HCT116 (cell line): ENCODE measurements at regions of chr3 and their contacts with region 1.

Region 1: GRCh38 chr3:137121704-137122314 is 164.0 kb downstream of the IL20RB start:
- DNase-seq: peak; percentile 61
- ATAC-seq: peak; percentile 95
- H3K4me3 ChIP-seq: no peak overlapping the region
- H3K27ac ChIP-seq: no peak overlapping the region
- H3K4me1 ChIP-seq: no peaks in the 10 kb centered on the region
- H3K27me3 ChIP-seq: peaks cover 15% of the 10 kb centered on the region
- CTCF ChIP-seq: peak; percentile 36 to 86 (median 83); a peak in 5 of 6 replicates
- POLR2A ChIP-seq: no peak
- RAD21 ChIP-seq: peak; percentile 55

Region 2: GRCh38 chr3:137110484-137110883 is 11.3 kb before region 1 on chr3:
- CTCF ChIA-PET with region 1: interaction called, 18 read pairs
- POLR2A ChIA-PET with region 1: no interaction called
- RAD21 ChIA-PET with region 1: no interaction called
- intact Hi-C with region 1: no loop called
- DNase-seq: peak; percentile 12
- ATAC-seq: peak; percentile 89
- H3K4me3 ChIP-seq: no peak overlapping the region
- H3K27ac ChIP-seq: no peak overlapping the region
- H3K4me1 ChIP-seq: no peaks in the 10 kb centered on the region
- H3K27me3 ChIP-seq: peaks cover 37% of the 10 kb centered on the region
- CTCF ChIP-seq: peak; percentile 22 to 78 (median 64); a peak in 5 of 6 replicates
- POLR2A ChIP-seq: no peak
- RAD21 ChIP-seq: peak; percentile 56